ENCODE measurements at regions of chr4 and their contacts with region 1.

Region 1: DNA sequence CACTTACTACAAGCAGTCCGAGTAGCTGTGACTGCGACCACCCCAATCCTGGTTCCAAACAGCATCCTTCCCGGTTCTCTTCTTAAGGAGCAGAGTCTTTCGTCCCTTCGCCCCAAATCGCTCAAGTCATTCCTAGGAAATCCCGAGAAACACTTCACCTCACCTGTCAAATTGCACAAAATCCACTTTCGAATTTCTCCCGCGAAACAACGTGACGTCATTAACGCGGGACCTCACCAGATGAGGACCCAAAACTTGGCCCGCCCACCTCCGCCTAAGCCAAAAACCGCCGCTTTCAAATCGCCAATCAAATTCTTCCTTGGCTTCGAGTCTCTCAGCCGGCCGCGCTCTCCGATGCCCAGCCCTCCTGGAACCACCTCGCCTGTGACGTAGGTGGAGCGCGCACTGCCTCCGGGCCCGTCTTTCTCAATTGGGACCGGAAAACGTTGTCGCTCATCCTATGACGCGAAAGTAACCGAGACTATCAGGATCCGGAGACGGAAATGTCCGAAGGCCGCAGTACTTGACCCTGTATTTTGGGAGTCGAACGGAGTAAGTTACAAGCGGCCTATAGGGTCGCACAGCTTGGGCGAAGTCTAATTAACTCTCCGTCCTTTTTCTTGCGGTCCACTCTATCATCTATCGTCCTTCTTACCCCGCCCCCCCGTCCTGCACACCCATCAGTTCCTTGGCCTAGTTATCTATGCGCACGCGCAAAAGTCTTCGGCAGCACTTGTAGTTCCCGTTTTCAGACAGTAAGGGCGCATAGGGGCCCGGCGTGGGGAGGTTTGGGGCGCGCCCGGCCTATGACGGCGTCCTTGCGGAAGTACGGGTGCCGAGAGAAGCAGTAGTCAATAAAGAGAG is at the starts of genes LARP7 and ZGRF1:
- DNase-seq: peak; percentile 97
- H3K4me3 Mint-ChIP-seq: no peak within 1 kb of the TSS
- H3K27ac Mint-ChIP-seq: peak within 1 kb of the TSS; percentile 61
- H3K4me1 Mint-ChIP-seq: peaks cover 16% of the 10 kb centered on the region
- H3K27me3 Mint-ChIP-seq: no peaks in the 10 kb centered on the region
- total RNA-seq, gene LARP7: 45.3 and 46.1 TPM in 2 replicates
- total RNA-seq, gene ZGRF1: 31.0 and 33.1 TPM in 2 replicates

Region 2: GRCh38 chr4:112119353-112119783 is 517.6 kb before region 1 on chr4:
- intact Hi-C with region 1: loop called (anchors 2 kb)
- DNase-seq: peak; percentile 21
- H3K4me3 Mint-ChIP-seq: peak overlapping the region; percentile 50
- H3K27ac Mint-ChIP-seq: peak overlapping the region; percentile 94
- H3K4me1 Mint-ChIP-seq: peaks cover 24% of the 10 kb centered on the region
- H3K27me3 Mint-ChIP-seq: no peaks in the 10 kb centered on the region

Region 3: GRCh38 chr4:112284662-112285411 is 352.1 kb before region 1 on chr4:
- intact Hi-C with region 1: loop called (anchors 2 kb)
- DNase-seq: no peak
- H3K4me3 Mint-ChIP-seq: peak overlapping the region; percentile 87
- H3K27ac Mint-ChIP-seq: peak overlapping the region; percentile 95
- H3K4me1 Mint-ChIP-seq: peaks cover 91% of the 10 kb centered on the region
- H3K27me3 Mint-ChIP-seq: no peaks in the 10 kb centered on the region

Region 4: GRCh38 chr4:112431158-112431557 is 205.8 kb before region 1 on chr4:
- intact Hi-C with region 1: no loop called
- DNase-seq: no peak
- H3K4me3 Mint-ChIP-seq: no peak overlapping the region
- H3K27ac Mint-ChIP-seq: no peak overlapping the region
- H3K4me1 Mint-ChIP-seq: no peaks in the 10 kb centered on the region
- H3K27me3 Mint-ChIP-seq: no peaks in the 10 kb centered on the region

Region 5: GRCh38 chr4:112706840-112707207 is 69.9 kb after region 1 on chr4:
- intact Hi-C with region 1: loop called (anchors 1 kb)
- DNase-seq: no peak
- H3K4me3 Mint-ChIP-seq: peak overlapping the region; percentile 92
- H3K27ac Mint-ChIP-seq: no peak overlapping the region
- H3K4me1 Mint-ChIP-seq: peaks cover 23% of the 10 kb centered on the region
- H3K27me3 Mint-ChIP-seq: peaks cover 54% of the 10 kb centered on the region

Region 6: GRCh38 chr4:112817933-112818593 is 181.1 kb after region 1 on chr4:
- intact Hi-C with region 1: loop called (anchors 2 kb)
- DNase-seq: peak; percentile 38
- H3K4me3 Mint-ChIP-seq: peak overlapping the region; percentile 85
- H3K27ac Mint-ChIP-seq: peak overlapping the region; percentile 86
- H3K4me1 Mint-ChIP-seq: peaks cover 19% of the 10 kb centered on the region
- H3K27me3 Mint-ChIP-seq: peaks cover 2% of the 10 kb centered on the region

Region 7: DNA sequence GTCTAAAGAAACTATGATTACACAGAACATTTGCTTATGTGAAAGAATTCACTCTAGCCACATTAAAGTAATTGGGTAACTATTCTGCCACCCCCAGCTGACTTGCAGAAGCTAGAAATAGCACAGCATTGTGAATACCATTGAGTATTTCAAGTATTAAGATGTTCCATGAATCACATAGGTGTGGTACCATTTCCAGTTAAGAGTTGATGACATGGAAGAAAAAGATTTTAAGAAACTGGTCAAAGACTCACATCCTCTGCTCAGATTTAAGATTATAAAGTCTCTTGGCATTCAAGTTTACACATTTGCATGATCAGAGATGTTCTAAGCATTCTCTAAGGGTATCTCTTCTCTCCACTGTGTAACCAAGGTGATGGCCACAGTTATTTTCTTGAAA is 837.1 kb after region 1 on chr4:
- intact Hi-C with region 1: loop called (anchors 5 kb)
- DNase-seq: no peak
- H3K4me3 Mint-ChIP-seq: no peak overlapping the region
- H3K27ac Mint-ChIP-seq: peak overlapping the region; percentile 82
- H3K4me1 Mint-ChIP-seq: peaks cover 39% of the 10 kb centered on the region
- H3K27me3 Mint-ChIP-seq: no peaks in the 10 kb centered on the region